CD4-positive, alpha-beta T cell (primary cell): ENCODE measurements at regions of chr5 and their contacts with region 1.

Region 1: DNA sequence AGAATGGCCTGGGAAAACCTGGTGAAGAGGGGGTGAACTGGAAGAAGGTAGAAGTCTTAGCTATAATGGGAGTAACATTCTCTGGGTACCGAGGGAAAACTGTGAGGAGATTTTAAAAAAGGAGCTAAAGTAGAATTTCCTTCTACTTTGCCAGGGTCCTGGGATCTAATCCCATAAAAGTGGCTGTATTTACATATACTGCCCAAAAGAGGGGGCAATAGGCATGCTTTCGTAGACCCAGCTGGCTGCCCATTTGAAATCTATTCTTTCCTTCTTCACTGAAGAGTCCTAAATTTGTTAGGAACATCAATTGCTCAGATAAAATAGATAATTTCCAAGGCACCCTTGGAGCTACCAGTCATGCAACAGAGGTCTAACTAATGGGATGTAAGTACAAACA is 159.2 kb downstream of the CDC42SE2 start:
- DNase-seq: peak in 1 of 14 experiments; percentile 11
- ATAC-seq: no peak
- H3K4me3 ChIP-seq: no peak overlapping the region
- H3K4me3 Mint-ChIP-seq: no peak overlapping the region
- H3K27ac ChIP-seq: no peak overlapping the region
- H3K27ac Mint-ChIP-seq: no peak overlapping the region
- H3K4me1 ChIP-seq: no peaks in the 10 kb centered on the region
- H3K4me1 Mint-ChIP-seq: peaks cover 20% of the 10 kb centered on the region
- H3K27me3 ChIP-seq: no peaks in the 10 kb centered on the region
- H3K27me3 Mint-ChIP-seq: no peaks in the 10 kb centered on the region
- CTCF ChIP-seq: no peak

Region 2: DNA sequence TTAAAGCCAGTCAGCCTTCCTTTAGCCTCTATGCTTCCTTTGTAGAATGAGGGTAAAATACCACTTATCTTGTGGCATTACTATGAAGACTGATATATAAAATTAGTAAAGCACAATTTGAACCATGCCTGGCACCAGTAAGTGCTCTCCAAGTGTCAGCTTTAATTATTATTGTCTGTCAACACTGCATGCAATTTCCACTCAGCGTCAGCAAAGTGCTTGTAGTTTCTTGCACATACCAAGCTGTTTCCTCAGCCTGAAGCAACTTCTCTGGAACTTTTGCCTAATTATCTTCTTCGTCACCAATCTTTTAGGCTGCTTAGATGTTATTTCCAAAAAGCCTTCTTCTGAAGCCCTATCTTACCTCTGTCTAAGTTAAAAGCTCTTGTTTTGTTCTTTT is 18.1 kb after region 1 on chr5:
- CTCF ChIA-PET with region 1: interaction called, 3 read pairs
- POLR2A ChIA-PET with region 1: no interaction called
- intact Hi-C with region 1: loop called in 1 of 2 experiments (anchors 2 kb)
- DNase-seq: no peak
- ATAC-seq: no peak
- H3K4me3 ChIP-seq: no peak overlapping the region
- H3K4me3 Mint-ChIP-seq: no peak overlapping the region
- H3K27ac ChIP-seq: no peak overlapping the region
- H3K27ac Mint-ChIP-seq: peak overlapping the region; percentile 50
- H3K4me1 ChIP-seq: no peaks in the 10 kb centered on the region
- H3K4me1 Mint-ChIP-seq: peaks cover 31% of the 10 kb centered on the region
- H3K27me3 ChIP-seq: no peaks in the 10 kb centered on the region
- H3K27me3 Mint-ChIP-seq: no peaks in the 10 kb centered on the region
- CTCF ChIP-seq: no peak

Region 3: DNA sequence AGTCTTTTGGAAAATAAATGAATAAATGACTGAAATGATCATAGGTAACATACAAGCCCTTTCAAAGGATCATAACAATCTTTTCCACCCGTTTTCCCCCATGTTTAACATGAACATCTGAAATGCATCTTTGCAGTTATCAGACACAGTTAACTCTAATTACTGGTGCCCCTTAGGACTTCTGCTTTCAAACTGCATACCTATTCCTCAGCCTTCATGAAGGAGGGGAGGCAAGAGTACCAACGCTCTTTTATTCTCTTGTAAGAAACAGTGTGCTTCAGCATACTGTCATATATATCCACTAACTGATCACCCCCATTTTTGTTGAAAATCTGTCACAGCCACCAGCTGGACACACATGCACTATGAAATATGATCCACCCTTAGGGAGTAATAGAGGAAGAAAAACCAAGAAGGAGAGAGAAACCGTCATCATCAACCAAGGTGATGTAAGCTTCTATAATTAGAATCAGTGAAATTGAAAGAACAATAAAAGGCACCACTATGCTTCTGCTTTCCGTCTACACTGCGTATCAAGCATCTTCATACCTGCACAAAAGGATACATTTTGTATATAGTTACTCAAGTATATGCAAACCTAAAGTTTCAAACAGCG is 113.3 kb after region 1 on chr5:
- CTCF ChIA-PET with region 1: no interaction called
- POLR2A ChIA-PET with region 1: no interaction called
- intact Hi-C with region 1: no loop called
- DNase-seq: peak in 3 of 14 experiments; percentile 62 to 77 (median 62)
- ATAC-seq: peak; percentile 48
- H3K4me3 ChIP-seq: no peak overlapping the region
- H3K4me3 Mint-ChIP-seq: peak overlapping the region; percentile 77
- H3K27ac ChIP-seq: peak overlapping the region; percentile 42 to 59
- H3K27ac Mint-ChIP-seq: peak overlapping the region; percentile 84
- H3K4me1 ChIP-seq: peaks cover 22% of the 10 kb centered on the region
- H3K4me1 Mint-ChIP-seq: peaks cover 86% of the 10 kb centered on the region
- H3K27me3 ChIP-seq: no peaks in the 10 kb centered on the region
- H3K27me3 Mint-ChIP-seq: no peaks in the 10 kb centered on the region
- CTCF ChIP-seq: no peak

Region 4: DNA sequence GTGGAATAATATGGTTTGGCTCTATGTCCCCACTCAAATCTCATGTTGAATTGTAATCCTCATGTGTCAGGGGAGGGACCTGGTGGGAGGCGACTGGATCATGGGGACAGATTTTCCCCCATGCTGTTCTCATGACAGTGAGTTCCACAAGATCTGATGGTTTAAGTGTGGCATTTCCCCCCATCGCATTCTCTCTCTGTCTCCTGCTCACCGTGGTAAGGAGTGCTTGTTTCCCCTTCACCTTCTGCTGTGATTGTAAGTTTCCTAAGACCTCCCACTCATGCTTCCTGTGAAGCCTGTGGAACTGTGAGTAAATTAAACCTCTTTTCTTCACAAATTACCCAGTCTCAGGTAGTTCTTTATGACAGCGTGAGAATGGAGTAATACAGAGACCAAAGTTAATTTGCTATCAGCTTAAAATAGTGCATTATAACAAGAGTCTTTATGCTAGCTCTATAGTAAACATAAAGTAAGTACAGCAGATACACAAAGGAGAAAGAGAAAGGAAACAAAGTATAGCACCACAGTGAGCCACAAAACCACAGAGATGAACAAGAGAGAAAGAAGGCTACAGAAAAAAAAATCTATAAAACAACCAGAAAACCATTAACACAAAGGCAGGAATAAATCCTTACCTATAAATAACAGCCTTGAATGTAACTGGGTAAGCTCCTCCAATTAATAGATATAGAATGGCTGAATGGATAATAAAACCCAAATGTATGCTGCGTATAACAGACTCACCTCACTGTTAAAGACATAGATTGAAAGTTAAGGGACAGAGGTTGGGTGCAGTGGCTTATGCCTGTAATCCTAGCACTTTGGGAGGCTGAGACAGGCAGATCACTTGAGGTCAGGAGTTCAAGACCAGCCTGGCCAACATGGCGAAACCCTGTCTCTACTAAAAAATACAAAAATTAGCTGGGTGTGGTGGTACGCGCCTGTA is 172.3 kb after region 1 on chr5:
- CTCF ChIA-PET with region 1: no interaction called
- POLR2A ChIA-PET with region 1: no interaction called
- intact Hi-C with region 1: no loop called
- DNase-seq: peak in 4 of 14 experiments; percentile 15 to 77 (median 56)
- ATAC-seq: peak; percentile 89
- H3K4me3 ChIP-seq: no peak overlapping the region
- H3K4me3 Mint-ChIP-seq: peak overlapping the region; percentile 45
- H3K27ac ChIP-seq: peak overlapping the region; percentile 45 to 50
- H3K27ac Mint-ChIP-seq: peak overlapping the region; percentile 70
- H3K4me1 ChIP-seq: peaks cover 23% of the 10 kb centered on the region
- H3K4me1 Mint-ChIP-seq: peaks cover 66% of the 10 kb centered on the region
- H3K27me3 ChIP-seq: no peaks in the 10 kb centered on the region
- H3K27me3 Mint-ChIP-seq: no peaks in the 10 kb centered on the region
- CTCF ChIP-seq: no peak